HCT116 (cell line): ENCODE measurements at regions of chr22 and their contacts with region 1.

Region 1: DNA sequence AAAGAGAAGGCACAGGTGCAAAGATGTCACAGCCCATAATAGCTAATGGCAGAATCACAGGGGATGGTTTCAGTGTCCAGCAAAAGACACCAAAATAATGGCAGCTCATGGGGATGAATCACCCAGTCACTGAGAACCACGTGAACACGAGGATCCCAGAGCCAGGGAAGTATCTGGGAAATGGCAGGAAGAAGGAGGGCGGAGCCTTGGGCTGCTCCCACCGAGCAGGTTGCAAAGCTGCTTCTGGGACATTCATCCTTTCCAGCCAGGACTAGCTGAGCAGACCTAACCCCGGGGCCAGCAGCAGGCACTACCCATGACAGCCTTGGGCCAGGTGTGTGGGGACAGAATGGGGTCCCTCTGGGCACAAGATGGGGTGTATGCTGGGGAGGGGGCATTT is 45.7 kb downstream of the TRMU start:
- DNase-seq: no peak
- ATAC-seq: no peak
- H3K4me3 ChIP-seq: no peak overlapping the region
- H3K27ac ChIP-seq: no peak overlapping the region
- H3K4me1 ChIP-seq: peaks cover 25 to 37% of the 10 kb centered on the region in 2 experiments
- H3K27me3 ChIP-seq: no peaks in the 10 kb centered on the region
- CTCF ChIP-seq: no peak
- POLR2A ChIP-seq: no peak
- RAD21 ChIP-seq: no peak

Region 2: GRCh38 chr22:46035742-46036557 is 345.2 kb before region 1 on chr22:
- CTCF ChIA-PET with region 1: no interaction called
- POLR2A ChIA-PET with region 1: no interaction called
- RAD21 ChIA-PET with region 1: no interaction called
- intact Hi-C with region 1: no loop called
- DNase-seq: peak; percentile 96
- ATAC-seq: peak; percentile 93
- H3K4me3 ChIP-seq: peak overlapping the region; percentile 93 to 98
- H3K27ac ChIP-seq: peak overlapping the region; percentile 73
- H3K4me1 ChIP-seq: peaks cover 8 to 21% of the 10 kb centered on the region in 2 experiments; a peak in 3 of 4 replicates
- H3K27me3 ChIP-seq: no peaks in the 10 kb centered on the region
- CTCF ChIP-seq: no peak
- POLR2A ChIP-seq: peak; percentile 51
- RAD21 ChIP-seq: no peak

Region 3: GRCh38 chr22:46405901-46406300 is 24.7 kb after region 1 on chr22:
- CTCF ChIA-PET with region 1: no interaction called
- POLR2A ChIA-PET with region 1: no interaction called
- RAD21 ChIA-PET with region 1: no interaction called
- intact Hi-C with region 1: loop called (anchors 2 kb)
- DNase-seq: no peak
- ATAC-seq: no peak
- H3K4me3 ChIP-seq: no peak overlapping the region
- H3K27ac ChIP-seq: no peak overlapping the region
- H3K4me1 ChIP-seq: no peaks in the 10 kb centered on the region
- H3K27me3 ChIP-seq: no peaks in the 10 kb centered on the region
- CTCF ChIP-seq: no peak
- POLR2A ChIP-seq: no peak
- RAD21 ChIP-seq: no peak